HepG2 (cell line): ENCODE measurements at regions of chr5 and their contacts with region 1.

Region 1: DNA sequence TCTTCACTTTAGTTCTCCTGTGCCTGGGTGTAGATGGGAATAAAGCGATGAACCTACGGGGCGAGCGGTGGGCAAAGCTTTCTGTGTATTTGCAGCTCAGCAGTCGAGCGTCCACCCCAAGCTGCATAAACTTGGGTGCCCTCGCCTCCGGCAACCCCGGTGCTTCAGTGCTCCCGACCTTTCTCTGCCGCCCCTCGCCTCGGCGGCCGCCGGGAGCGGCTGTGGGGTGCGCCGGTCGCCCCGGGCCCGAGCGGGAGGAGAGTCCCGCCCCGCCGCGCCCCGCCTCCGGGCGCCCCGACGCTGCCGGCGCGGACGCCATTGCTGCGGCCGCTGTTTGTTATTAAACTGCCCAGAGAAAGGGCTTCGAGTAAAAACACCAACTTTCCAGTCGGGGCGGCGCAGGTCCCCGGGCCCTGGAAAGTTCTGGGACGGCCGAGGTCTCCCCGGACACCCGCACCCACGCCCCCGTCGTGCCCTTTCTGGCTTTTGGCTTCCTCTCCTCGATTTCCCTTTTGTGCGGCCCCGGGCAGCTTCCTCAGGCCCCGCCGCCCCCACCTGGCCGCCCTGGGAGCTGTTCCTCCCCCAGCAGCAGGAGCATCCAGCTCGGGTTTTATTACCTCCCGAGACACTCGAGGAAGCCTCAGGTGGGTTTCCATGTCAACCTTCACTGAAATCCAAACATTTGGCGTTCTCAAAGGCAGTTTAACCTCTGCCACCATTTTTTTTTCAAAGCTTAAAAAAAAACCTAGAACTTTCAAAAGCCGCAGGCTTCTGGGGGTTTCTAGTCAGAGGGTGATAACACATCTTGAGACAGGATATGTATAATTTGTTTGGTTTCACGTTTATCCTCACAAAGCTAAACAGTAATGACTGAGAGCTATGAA is 334.3 kb downstream of the CWC27 start:
- DNase-seq: peak; percentile 35
- ATAC-seq: peak; percentile 79
- H3K4me3 ChIP-seq: peak overlapping the region; percentile 75 to 77 (median 76)
- H3K27ac ChIP-seq: peak overlapping the region; percentile 46
- H3K4me1 ChIP-seq: peaks cover 21% of the 10 kb centered on the region
- H3K27me3 ChIP-seq: peaks cover 1 to 28% of the 10 kb centered on the region in 2 experiments; a peak in 3 of 5 replicates
- CTCF ChIP-seq: peak; percentile 51
- EP300 ChIP-seq: no peak
- POLR2A ChIP-seq: no peak
- RAD21 ChIP-seq: no peak; the same call in 1 of the 2 replicates

Region 2: DNA sequence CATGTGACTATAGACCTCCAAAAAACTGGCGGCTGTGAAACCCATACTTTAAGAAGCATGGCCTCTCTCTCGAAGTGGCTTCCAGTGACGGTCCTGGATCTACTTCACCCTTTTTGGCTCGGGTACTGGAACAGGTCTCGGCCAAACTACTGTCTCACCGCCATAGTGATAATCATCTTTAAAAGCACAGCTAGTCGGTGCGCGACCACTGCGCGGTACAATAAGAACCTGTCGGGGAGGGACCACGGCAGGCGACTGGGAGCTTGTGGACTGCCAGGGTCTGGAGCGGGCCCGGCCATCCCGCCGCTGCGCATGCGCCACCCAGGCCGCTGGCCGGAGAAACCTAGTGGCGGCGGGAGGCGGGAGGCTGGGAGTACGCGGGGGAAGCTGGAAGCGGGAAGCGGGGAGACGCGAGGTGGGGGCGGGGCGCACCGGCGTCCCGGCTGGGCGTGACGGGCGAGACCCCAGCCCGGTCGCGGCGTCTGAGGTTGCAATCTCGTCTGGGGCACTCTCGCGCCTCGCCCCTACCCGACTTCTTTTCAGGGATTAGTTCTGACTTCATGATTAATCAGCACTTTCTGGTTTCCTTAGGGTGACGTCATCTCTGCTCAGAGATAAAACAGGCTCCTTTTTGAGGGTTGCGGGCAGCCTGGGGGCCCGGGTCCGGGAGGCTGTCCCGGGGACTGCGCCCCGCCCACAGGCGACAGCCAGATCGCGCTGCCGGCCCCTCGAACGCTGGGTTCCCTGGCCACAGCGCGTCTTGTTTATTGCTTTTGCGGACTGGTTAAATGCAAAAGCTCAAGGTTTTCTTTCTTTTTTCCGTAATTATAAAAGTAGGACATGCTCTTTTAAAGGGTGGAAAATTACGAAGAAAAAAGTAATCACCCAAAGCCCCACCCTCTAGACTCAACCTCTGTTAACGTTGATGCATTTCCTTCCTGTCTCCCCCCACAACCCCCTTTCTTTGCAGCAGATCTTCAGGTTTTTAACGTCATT is 67.6 kb before region 1 on chr5:
- CTCF ChIA-PET with region 1: no interaction called
- POLR2A ChIA-PET with region 1: interaction called, 5 read pairs
- in situ Hi-C with region 1: no loop called
- intact Hi-C with region 1: loop called (anchors 2 kb)
- DNase-seq: peak; percentile 68
- ATAC-seq: peak; percentile 93
- H3K4me3 ChIP-seq: peak overlapping the region; percentile 62 to 77 (median 71)
- H3K27ac ChIP-seq: peak overlapping the region; percentile 20
- H3K4me1 ChIP-seq: peaks cover 36% of the 10 kb centered on the region
- H3K27me3 ChIP-seq: no peaks in the 10 kb centered on the region; a peak in 2 of 5 replicates
- CTCF ChIP-seq: no peak
- EP300 ChIP-seq: no peak
- POLR2A ChIP-seq: peak; percentile 30 to 47; a peak in 3 of 4 replicates
- RAD21 ChIP-seq: 0 out of 2 replicates have a peak, but pooled peaks have one; percentile 8

Region 3: GRCh38 chr5:65076251-65076869 is 26.7 kb before region 1 on chr5:
- CTCF ChIA-PET with region 1: no interaction called
- POLR2A ChIA-PET with region 1: no interaction called
- in situ Hi-C with region 1: no loop called
- intact Hi-C with region 1: no loop called
- DNase-seq: peak; percentile 45
- ATAC-seq: peak; percentile 82
- H3K4me3 ChIP-seq: no peak overlapping the region
- H3K27ac ChIP-seq: no peak overlapping the region
- H3K4me1 ChIP-seq: no peaks in the 10 kb centered on the region
- H3K27me3 ChIP-seq: peaks cover 0 to 18% of the 10 kb centered on the region in 2 experiments; a peak in 2 of 5 replicates
- CTCF ChIP-seq: peak; percentile 26; the same call in 1 of the 2 replicates
- EP300 ChIP-seq: no peak
- POLR2A ChIP-seq: no peak
- RAD21 ChIP-seq: no peak

Region 4: DNA sequence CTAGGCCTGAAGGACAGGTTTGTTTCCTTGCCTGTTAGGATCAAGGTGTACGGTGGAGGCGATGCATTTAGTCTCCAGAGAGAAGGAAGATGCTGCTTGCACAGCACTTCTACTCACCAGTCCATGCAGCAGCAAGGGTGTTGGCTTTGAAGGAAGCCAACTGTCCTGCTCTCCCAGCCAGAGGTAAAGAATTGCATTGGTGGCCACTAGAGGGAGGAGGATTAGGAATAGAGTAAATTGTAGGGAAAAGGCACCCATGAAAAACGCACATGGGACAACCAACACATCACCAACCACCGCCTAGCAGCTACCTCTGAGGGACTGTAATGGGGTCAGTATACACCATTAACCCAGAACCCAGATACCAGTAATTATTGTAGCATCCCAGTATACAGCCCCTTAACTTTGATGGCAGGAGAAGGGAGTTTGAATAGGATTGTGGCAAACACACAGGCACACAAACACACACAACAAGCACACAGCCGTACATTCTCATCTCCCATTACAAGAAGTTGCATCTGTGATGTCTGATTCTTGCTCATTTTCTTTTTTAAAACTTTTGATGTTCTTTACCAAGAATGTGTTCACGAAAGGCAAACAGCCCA is 111.0 kb after region 1 on chr5:
- CTCF ChIA-PET with region 1: no interaction called
- POLR2A ChIA-PET with region 1: no interaction called
- in situ Hi-C with region 1: no loop called
- intact Hi-C with region 1: loop called (anchors 2 kb)
- DNase-seq: peak; percentile 41
- ATAC-seq: peak; percentile 94
- H3K4me3 ChIP-seq: no peak overlapping the region
- H3K27ac ChIP-seq: no peak overlapping the region
- H3K4me1 ChIP-seq: no peaks in the 10 kb centered on the region
- H3K27me3 ChIP-seq: no peaks in the 10 kb centered on the region
- CTCF ChIP-seq: peak; percentile 62
- EP300 ChIP-seq: no peak
- POLR2A ChIP-seq: no peak
- RAD21 ChIP-seq: no peak

Region 5: GRCh38 chr5:65382582-65382981 is 279.5 kb after region 1 on chr5:
- CTCF ChIA-PET with region 1: no interaction called
- POLR2A ChIA-PET with region 1: no interaction called
- in situ Hi-C with region 1: no loop called
- intact Hi-C with region 1: no loop called
- DNase-seq: no peak
- ATAC-seq: peak; percentile 47; the same call in 2 of the 3 replicates
- H3K4me3 ChIP-seq: no peak overlapping the region
- H3K27ac ChIP-seq: no peak overlapping the region
- H3K4me1 ChIP-seq: no peaks in the 10 kb centered on the region
- H3K27me3 ChIP-seq: no peaks in the 10 kb centered on the region
- CTCF ChIP-seq: no peak
- EP300 ChIP-seq: no peak
- POLR2A ChIP-seq: no peak
- RAD21 ChIP-seq: no peak